Cardiac septum (tissue), 1 donor: ENCODE measurements at regions of chr10 and their contacts with region 1.

Region 1: GRCh38 chr10:5094265-5095205 is at the start of gene AKR1C3:
- DNase-seq: no peak
- total RNA-seq, gene AKR1C3: 15.2 TPM

Region 2: DNA sequence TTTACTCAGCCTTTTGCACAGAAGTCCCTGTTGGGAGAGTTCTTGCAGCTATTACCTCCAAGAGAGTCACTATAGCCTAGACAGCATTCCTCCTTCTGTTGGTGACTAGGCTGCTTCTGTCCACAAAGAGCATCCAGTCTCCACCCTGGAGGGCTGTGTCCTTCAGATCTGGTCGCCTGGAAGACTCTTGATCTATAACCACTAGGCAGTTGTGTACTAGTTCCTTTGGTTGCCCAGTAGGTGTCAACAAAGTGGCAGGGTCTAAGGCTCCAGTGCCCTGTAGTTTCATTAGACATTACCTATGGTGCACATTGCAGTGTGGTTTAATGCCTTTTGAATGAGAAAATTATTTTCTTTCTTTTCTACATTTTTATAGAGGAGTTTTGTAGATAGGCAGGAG is 79.6 kb before region 1 on chr10:
- intact Hi-C with region 1: loop called (anchors 5 kb)
- DNase-seq: no peak